Activated T-helper 1 cell treated with anti-CD3 and anti-CD28 coated beads, Interleukin-12 subunit alpha, Interleukin-12 subunit beta, Interleukin-2, Interleukin-4 antibody, amounts not matched to agents 30 ng/mL and 10 ng/mL and 1 ng/mL, durations not matched to agents 14 hours and 24 hours and 36 hours (primary cell): ENCODE measurements at regions of chr11 and their contacts with region 1.

Region 1: DNA sequence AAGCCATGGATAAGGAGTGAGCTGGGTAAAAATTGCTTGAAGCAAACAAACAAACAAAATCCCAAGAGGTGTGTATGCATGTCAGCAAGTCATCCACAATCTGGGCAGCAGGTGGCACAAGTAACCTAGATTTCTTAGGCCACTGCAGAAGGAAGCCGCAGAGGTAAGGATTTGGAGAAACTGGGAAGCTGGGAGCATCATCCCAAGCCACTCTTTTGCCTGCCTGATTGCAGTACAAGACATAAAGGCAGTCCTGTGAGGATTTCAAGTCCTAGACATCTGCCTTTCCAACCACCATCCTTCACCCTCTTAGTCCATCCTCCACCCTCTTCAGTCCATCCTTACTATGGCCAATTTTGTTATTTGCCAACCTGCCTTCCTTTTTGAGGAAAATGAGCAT is 67.2 kb upstream of the BMAL1 start:
- DNase-seq: no peak
- H3K4me3 Mint-ChIP-seq: no peak overlapping the region
- H3K27ac Mint-ChIP-seq: no peak overlapping the region
- H3K4me1 Mint-ChIP-seq: peaks cover 25% of the 10 kb centered on the region
- H3K27me3 Mint-ChIP-seq: no peaks in the 10 kb centered on the region

Region 2: GRCh38 chr11:12110201-12110713 is 1100.2 kb before region 1 on chr11 and contains the start of gene MICAL2:
- intact Hi-C with region 1: loop called (anchors 10 kb)
- DNase-seq: peak; percentile 90
- H3K4me3 Mint-ChIP-seq: peak within 1 kb of the TSS; percentile 90
- H3K27ac Mint-ChIP-seq: peak within 1 kb of the TSS; percentile 99
- H3K4me1 Mint-ChIP-seq: peaks cover 75% of the 10 kb centered on the region
- H3K27me3 Mint-ChIP-seq: no peaks in the 10 kb centered on the region
- total RNA-seq, gene MICAL2: 595 and 619 TPM in 2 replicates

Region 3: DNA sequence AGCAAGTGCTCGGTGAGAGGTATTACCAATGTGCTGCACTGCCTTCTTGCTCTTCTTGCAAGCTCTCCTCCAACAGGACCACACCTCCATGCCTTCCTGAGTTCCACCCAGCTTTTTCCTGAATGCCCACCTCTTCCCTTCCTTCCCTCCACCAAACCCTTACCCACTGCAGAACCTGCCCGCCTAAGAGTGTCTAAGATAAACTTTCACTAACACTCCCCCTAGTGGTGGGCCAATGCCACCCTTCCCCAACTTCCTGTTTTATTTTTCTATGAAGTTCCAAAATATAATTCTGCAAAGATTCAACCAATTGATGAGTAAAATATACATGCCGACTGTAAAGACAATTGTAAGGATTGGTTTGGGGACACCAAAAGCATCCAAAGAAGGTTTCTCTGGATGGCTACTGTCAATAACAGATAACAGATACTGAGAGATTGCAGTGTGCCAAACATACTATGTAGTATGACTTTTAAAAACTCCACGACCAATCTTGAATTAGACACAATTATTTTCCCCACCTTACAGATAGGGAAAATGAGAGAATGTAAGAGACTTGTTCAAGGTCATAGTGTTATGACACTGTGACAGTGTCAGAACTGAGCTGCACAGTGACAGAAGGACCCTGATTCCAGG is 28.6 kb after region 1 on chr11:
- intact Hi-C with region 1: loop called (anchors 1 kb)
- DNase-seq: peak; percentile 21
- H3K4me3 Mint-ChIP-seq: no peak overlapping the region
- H3K27ac Mint-ChIP-seq: no peak overlapping the region
- H3K4me1 Mint-ChIP-seq: no peaks in the 10 kb centered on the region
- H3K27me3 Mint-ChIP-seq: peaks cover 23% of the 10 kb centered on the region

Region 4: DNA sequence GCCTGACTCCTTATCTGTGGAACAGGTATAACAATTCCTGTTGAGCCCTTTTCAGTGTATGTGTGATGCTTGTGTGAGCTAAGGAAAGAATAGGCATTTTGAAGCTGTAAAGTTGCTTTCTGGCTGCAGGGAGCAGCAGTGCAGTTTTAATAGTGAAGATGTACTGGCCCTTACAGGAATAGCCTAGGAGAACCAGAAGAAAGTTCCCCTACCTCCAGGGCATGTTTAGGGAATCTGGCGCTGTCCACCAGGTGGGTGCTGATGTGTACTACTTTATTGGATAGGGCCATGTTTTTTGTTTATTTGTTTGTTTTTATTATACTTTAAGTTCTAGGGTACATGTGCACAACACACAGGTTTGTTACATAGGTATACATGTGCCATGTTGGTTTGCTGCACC is 78.7 kb after region 1 on chr11:
- intact Hi-C with region 1: loop called (anchors 1 kb)
- DNase-seq: no peak
- H3K4me3 Mint-ChIP-seq: no peak overlapping the region
- H3K27ac Mint-ChIP-seq: peak overlapping the region; percentile 84
- H3K4me1 Mint-ChIP-seq: peaks cover 84% of the 10 kb centered on the region
- H3K27me3 Mint-ChIP-seq: no peaks in the 10 kb centered on the region

Region 5: DNA sequence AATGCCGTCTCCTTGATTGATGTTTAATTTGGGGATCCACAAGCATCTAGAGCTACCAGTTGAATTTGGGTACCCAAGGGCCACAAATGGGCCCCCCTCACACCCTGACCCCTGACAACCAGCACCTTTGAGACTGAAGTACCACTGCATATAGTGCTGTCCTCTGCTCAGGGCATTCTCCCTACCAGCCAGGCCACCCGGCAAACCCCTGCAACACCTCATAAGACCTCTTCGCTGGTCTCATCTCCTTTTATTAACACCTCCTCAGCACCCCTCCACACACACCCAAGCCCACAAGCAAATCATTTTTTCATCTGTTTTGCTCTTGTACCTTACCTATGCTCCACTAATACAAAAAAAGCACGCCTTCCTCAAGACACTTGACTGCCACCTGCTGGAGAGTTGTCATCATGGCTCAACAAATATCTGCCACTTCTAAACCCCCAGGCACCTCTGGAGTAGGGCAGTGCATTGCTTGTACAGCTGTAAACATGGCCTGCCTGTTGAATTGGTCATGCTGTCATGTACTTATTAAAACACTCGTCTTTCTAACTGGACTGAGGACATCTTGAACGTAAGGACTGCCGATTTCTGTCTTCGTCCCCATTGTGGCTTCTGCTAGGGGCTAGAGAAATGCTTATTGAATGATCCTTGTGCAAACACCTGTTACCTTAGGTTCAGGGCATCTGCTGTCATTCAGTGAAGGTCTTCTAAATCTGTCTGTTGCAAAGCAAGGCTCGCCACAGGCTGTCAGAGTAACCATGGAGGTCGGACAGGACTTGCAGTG is 133.7 kb after region 1 on chr11:
- intact Hi-C with region 1: loop called (anchors 1 kb)
- DNase-seq: peak; percentile 53
- H3K4me3 Mint-ChIP-seq: no peak overlapping the region
- H3K27ac Mint-ChIP-seq: peak overlapping the region; percentile 29
- H3K4me1 Mint-ChIP-seq: peaks cover 41% of the 10 kb centered on the region
- H3K27me3 Mint-ChIP-seq: no peaks in the 10 kb centered on the region

Region 6: GRCh38 chr11:13462901-13463778 is 252.7 kb after region 1 on chr11 and contains the start of gene BTBD10:
- intact Hi-C with region 1: loop called (anchors 1 kb)
- DNase-seq: peak; percentile 92
- H3K4me3 Mint-ChIP-seq: peak within 1 kb of the TSS; percentile 99
- H3K27ac Mint-ChIP-seq: peak within 1 kb of the TSS; percentile 98
- H3K4me1 Mint-ChIP-seq: peaks cover 38% of the 10 kb centered on the region
- H3K27me3 Mint-ChIP-seq: peaks cover 3% of the 10 kb centered on the region
- total RNA-seq, gene BTBD10: 21.2 and 21.9 TPM in 2 replicates

Region 7: GRCh38 chr11:13868710-13869397 is 658.4 kb after region 1 on chr11:
- intact Hi-C with region 1: loop called (anchors 5 kb)
- DNase-seq: peak; percentile 25
- H3K4me3 Mint-ChIP-seq: peak overlapping the region; percentile 31
- H3K27ac Mint-ChIP-seq: peak overlapping the region; percentile 71
- H3K4me1 Mint-ChIP-seq: peaks cover 35% of the 10 kb centered on the region
- H3K27me3 Mint-ChIP-seq: peaks cover 12% of the 10 kb centered on the region